ENCODE measurements at regions of chr15 and their contacts with region 1.

Region 1: DNA sequence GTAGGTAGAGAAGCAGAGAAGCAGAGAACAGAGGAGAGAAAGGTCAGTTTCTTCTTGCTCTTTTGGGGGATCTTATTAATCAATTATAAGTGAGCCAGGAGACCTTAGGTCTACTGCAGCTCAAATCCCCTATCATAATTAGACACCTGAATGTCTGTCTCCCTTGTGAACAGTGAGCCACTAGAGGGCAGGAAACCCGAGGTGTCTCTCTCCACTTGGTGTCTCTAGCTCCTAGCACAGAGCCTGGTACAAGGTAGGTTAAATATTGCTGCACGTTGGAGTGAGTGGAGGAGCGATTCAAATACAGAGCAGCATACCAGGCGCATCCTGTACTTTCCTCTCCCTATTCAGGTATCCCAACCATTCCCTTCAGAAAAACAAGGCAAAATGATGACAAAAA is 2.0 kb upstream of the ST8SIA2 start:
- DNase-seq: peak; percentile 44
- H3K4me3 ChIP-seq: no peak overlapping the region
- H3K27ac ChIP-seq: no peak overlapping the region
- H3K4me1 ChIP-seq: no peaks in the 10 kb centered on the region
- H3K27me3 ChIP-seq: peaks cover 57% of the 10 kb centered on the region

Region 2: DNA sequence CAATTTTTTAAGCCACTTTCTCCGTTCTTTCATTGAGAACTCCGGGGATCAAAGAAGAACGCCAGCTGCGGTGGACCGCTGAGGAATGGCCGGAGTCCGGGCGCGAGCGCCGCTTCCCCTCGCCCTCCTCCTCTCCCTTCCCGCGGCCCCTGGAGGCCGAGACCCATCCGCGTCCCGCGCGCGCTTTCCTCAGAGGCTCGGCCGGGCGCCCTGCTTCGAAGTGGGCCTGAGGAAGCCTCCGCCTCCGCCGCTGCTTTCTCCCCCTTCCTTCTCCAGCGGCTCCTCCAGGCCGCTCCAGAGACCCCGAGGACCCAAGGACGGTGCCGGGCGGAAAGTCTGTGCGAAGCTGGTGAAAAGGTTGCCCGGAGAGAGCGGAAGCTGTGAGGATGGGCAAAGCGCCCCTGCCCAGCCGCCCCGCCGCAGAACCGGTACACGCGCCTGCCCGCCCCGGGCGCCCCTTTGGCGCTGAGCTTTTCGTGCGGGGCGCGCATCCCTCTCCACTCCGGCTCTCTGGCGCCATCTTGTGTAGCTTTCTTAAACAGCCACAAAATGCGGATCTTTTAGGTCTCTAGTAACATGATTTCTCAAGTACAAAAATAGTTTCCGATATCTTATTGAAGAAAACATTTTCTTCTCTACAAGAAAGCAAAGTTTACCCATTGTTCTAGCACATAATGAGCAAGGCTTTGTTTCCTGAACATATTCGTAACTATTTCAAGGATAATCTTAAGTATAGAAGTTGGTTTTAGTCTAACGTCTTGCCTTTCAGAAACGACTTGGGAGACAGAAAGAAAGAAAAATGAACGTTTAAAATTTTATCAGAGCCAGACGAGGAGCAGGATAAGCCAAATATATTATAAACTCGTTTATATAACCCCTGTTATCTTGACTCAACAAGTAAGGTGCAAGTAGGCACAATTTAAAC is 323.1 kb after region 1 on chr15:
- in situ Hi-C with region 1: loop called (anchors 25 kb)
- DNase-seq: peak; percentile 84
- H3K4me3 ChIP-seq: peak overlapping the region; percentile 76
- H3K27ac ChIP-seq: no peak overlapping the region
- H3K4me1 ChIP-seq: no peaks in the 10 kb centered on the region
- H3K27me3 ChIP-seq: no peaks in the 10 kb centered on the region

Measured in GM23248 (cell line).